ENCODE measurements at regions of chr13 and their contacts with region 1.

Region 1: DNA sequence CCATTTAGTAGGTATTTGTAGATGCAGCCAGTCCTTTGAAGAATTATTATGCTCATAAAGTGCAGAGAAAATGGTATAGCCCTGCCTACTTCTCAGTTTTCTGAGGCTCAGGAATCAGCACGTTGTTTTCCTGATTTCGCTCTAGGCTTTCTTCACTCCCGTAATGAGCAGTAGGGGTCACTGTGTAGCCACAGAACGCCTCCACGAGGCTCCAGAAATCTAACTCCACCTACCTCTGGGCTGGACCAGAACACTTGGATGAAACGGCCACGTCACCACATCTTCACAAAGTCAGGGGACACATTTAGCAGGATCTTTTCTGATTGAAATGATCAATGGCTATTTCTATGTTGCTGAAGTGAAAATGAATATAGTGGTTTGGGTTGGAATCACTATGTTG is 49.8 kb upstream of the GTF3A start:
- DNase-seq: peak; percentile 16 to 57 (median 46)
- ATAC-seq: peak; percentile 92
- H3K4me3 ChIP-seq: no peak overlapping the region
- H3K4me3 Mint-ChIP-seq: peak overlapping the region in 1 of 10 donors; percentile 19
- H3K27ac ChIP-seq: no peak overlapping the region
- H3K27ac Mint-ChIP-seq: no peak overlapping the region
- H3K4me1 ChIP-seq: no peaks in the 10 kb centered on the region
- H3K4me1 Mint-ChIP-seq: peaks cover 0 to 17% (median 4%) of the 10 kb centered on the region in 7 donors
- H3K27me3 ChIP-seq: no peaks in the 10 kb centered on the region
- H3K27me3 Mint-ChIP-seq: peaks cover 10 to 26% (median 17%) of the 10 kb centered on the region in 5 donors

Region 2: DNA sequence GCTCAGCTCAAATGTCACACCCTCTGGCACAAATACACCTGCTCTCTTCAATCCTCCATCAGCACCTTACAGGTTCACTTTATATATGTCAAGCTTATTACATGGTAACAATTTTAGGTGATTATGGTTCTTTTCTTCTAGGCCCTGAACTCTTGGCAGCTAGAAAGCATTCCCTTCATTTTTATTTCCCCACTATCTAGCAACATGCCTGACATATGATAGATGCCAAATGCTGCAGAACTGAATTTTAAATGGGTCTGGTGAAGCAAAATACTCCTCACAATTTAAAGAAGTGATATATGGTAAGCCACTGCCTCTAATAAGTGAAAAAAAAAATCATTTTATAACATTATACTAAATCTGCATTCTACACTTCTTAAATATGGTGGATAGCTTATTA is 298.2 kb before region 1 on chr13:
- CTCF ChIA-PET with region 1: no interaction called
- POLR2A ChIA-PET with region 1: no interaction called
- intact Hi-C with region 1: no loop called
- DNase-seq: no peak
- ATAC-seq: no peak
- H3K4me3 ChIP-seq: no peak overlapping the region
- H3K4me3 Mint-ChIP-seq: no peak overlapping the region
- H3K27ac ChIP-seq: no peak overlapping the region
- H3K27ac Mint-ChIP-seq: no peak overlapping the region
- H3K4me1 ChIP-seq: no peaks in the 10 kb centered on the region
- H3K4me1 Mint-ChIP-seq: peaks cover 9 to 23% (median 13%) of the 10 kb centered on the region in 7 donors
- H3K27me3 ChIP-seq: no peaks in the 10 kb centered on the region
- H3K27me3 Mint-ChIP-seq: no peaks in the 10 kb centered on the region

Region 3: DNA sequence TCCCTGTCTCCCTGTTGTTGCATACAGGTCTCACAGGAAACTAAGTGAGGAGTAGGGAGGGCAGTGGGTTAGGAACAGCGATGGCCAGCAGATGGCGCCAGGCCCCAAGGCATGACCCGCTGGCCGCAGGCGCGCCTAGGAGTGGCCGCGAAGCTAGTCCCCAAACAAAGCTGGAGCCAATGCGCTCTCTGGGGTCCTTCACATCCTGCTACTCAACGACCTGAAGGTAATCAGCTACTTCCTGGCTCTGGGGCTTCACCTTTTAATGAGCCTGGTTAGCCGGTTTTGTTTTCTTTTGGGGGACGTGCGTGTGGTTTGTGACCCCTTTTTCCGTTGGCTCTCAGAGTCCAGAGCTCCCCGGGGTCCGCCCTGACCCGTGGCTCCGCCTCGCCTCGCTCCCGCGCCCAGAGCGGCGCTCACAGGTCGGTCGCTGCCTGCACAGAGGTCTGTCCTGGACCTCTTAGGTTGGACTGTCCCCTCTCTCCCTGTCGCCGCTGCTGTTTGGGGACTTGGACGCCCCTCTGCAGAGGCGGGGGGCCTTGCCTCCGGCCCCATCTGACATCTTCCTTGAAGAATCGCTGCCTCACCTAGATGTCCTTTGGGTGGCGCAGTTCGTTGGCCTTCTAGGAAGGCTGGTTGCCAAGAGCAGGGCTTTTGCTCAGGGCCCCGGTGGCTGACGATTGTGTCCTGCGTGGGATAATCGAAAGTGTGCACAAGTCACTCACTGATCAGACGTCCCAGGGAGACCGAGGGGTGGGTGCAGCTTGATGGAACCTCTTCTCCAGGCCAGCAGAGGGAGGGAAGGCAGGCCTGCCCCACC is 12.4 kb before region 1 on chr13:
- CTCF ChIA-PET with region 1: interaction called, 11 read pairs
- POLR2A ChIA-PET with region 1: no interaction called
- intact Hi-C with region 1: loop called (anchors 1 kb)
- DNase-seq: peak; percentile 51 to 82 (median 66)
- ATAC-seq: peak; percentile 95
- H3K4me3 ChIP-seq: peak overlapping the region; percentile 47
- H3K4me3 Mint-ChIP-seq: peak overlapping the region; percentile 24 to 83 (median 45)
- H3K27ac ChIP-seq: no peak overlapping the region
- H3K27ac Mint-ChIP-seq: peak overlapping the region in 1 of 9 donors; percentile 35
- H3K4me1 ChIP-seq: peaks cover 0 to 4% of the 10 kb centered on the region in 2 donors
- H3K4me1 Mint-ChIP-seq: peaks cover 0 to 9% (median 5%) of the 10 kb centered on the region in 7 donors
- H3K27me3 ChIP-seq: peaks cover 0 to 7% of the 10 kb centered on the region in 2 donors
- H3K27me3 Mint-ChIP-seq: peaks cover 13 to 50% (median 25%) of the 10 kb centered on the region in 5 donors

Region 4: DNA sequence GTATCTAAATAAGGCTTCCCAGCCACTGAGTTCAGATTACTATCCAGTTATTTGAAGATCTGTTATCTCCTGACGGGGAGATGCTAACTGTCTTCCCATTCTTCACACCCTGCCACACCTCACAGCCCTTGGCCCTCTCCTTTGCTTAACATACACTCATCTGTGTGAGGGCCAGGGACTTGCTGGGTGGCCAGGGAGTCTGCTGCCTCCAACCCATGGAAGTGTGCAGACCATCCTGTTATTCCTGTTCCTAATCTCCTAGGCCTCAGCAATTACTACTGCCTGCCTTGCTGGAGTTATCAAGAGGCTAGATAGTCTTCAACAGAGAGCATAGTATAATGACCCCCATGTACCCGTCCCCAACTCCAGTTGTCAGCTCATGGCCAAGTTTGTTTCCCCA is 13.6 kb after region 1 on chr13:
- CTCF ChIA-PET with region 1: no interaction called
- POLR2A ChIA-PET with region 1: no interaction called
- intact Hi-C with region 1: no loop called
- DNase-seq: no peak
- ATAC-seq: no peak
- H3K4me3 ChIP-seq: no peak overlapping the region
- H3K4me3 Mint-ChIP-seq: no peak overlapping the region
- H3K27ac ChIP-seq: no peak overlapping the region
- H3K27ac Mint-ChIP-seq: no peak overlapping the region
- H3K4me1 ChIP-seq: no peaks in the 10 kb centered on the region
- H3K4me1 Mint-ChIP-seq: no peaks in the 10 kb centered on the region
- H3K27me3 ChIP-seq: no peaks in the 10 kb centered on the region
- H3K27me3 Mint-ChIP-seq: peaks cover 0 to 20% (median 0%) of the 10 kb centered on the region in 5 donors

Region 5: GRCh38 chr13:27424246-27425157 is 49.9 kb after region 1 on chr13 and contains the start of gene GTF3A:
- CTCF ChIA-PET with region 1: interaction called, 4 read pairs
- POLR2A ChIA-PET with region 1: no interaction called
- intact Hi-C with region 1: loop called (anchors 1 to 5 kb)
- DNase-seq: peak; percentile 83 to 97 (median 93)
- ATAC-seq: peak; percentile 77
- H3K4me3 ChIP-seq: peak within 1 kb of the TSS; percentile 71
- H3K4me3 Mint-ChIP-seq: peak within 1 kb of the TSS; percentile 81 to 96 (median 92)
- H3K27ac ChIP-seq: peak within 1 kb of the TSS; percentile 86
- H3K27ac Mint-ChIP-seq: peak within 1 kb of the TSS; percentile 88 to 98 (median 95)
- H3K4me1 ChIP-seq: peaks cover 24 to 45% of the 10 kb centered on the region in 2 donors
- H3K4me1 Mint-ChIP-seq: peaks cover 27 to 47% (median 42%) of the 10 kb centered on the region in 7 donors
- H3K27me3 ChIP-seq: no peaks in the 10 kb centered on the region
- H3K27me3 Mint-ChIP-seq: no peaks in the 10 kb centered on the region
- total RNA-seq, gene GTF3A: 123 to 254 (median 206) TPM

Region 6: GRCh38 chr13:27712421-27712820 is 337.8 kb after region 1 on chr13:
- CTCF ChIA-PET with region 1: no interaction called
- POLR2A ChIA-PET with region 1: no interaction called
- intact Hi-C with region 1: loop called (anchors 1 to 10 kb)
- DNase-seq: peak in 3 of 9 donors; percentile 24 to 29 (median 28)
- ATAC-seq: no peak
- H3K4me3 ChIP-seq: no peak overlapping the region
- H3K4me3 Mint-ChIP-seq: no peak overlapping the region
- H3K27ac ChIP-seq: no peak overlapping the region
- H3K27ac Mint-ChIP-seq: no peak overlapping the region
- H3K4me1 ChIP-seq: no peaks in the 10 kb centered on the region
- H3K4me1 Mint-ChIP-seq: no peaks in the 10 kb centered on the region
- H3K27me3 ChIP-seq: no peaks in the 10 kb centered on the region
- H3K27me3 Mint-ChIP-seq: peaks cover 13 to 29% (median 16%) of the 10 kb centered on the region in 5 donors

Region 7: DNA sequence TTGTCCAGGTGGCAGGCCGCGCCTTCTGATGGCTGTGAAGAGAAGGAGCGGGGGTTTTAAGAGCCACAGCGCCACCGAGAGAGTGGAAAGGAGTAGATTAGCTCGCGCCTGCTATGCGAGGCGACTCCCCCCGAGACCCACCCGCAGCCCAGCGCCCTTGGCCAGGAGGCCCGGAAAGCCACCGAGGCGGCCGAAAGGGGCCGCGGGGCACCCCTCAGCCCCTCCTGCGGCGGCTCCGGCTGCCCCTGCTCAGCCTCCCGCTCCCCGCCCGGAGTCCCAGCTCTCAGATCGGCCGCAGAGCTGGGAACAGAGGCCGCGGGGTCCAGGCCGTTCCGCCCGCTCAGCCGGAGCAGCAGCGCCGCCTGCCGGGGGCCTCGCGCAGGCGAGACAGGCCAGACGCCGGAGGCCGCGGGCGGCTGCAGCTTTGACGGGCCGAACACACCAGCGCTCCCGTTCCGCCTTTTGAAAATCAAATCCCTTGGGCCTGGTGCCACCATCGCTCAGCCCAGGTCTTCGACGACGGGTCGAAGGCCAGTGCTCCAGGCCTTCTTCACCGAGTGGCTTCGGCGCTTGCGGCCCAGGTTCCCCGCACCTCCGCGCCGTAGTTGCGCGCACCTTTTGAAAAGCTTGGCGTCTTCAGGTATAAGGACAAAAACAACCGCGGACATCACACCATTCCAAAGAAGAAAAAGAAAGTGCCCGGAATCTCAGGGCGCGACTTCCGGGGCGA is 579.2 kb after region 1 on chr13:
- CTCF ChIA-PET with region 1: no interaction called
- POLR2A ChIA-PET with region 1: no interaction called
- intact Hi-C with region 1: loop called in 1 of 2 experiments (anchors 10 kb)
- DNase-seq: peak in 8 of 9 donors; percentile 28 to 79 (median 54)
- ATAC-seq: peak; percentile 87
- H3K4me3 ChIP-seq: peak overlapping the region; percentile 35
- H3K4me3 Mint-ChIP-seq: peak overlapping the region; percentile 70 to 83 (median 78)
- H3K27ac ChIP-seq: no peak overlapping the region
- H3K27ac Mint-ChIP-seq: peak overlapping the region in 1 of 9 donors; percentile 38
- H3K4me1 ChIP-seq: no peaks in the 10 kb centered on the region
- H3K4me1 Mint-ChIP-seq: peaks cover 0 to 26% (median 15%) of the 10 kb centered on the region in 7 donors
- H3K27me3 ChIP-seq: peaks cover 0 to 16% of the 10 kb centered on the region in 2 donors
- H3K27me3 Mint-ChIP-seq: peaks cover 75 to 83% (median 77%) of the 10 kb centered on the region in 5 donors

Measured in naive thymus-derived CD4-positive, alpha-beta T cell (primary cell).